ENCODE measurements at regions of chr15 and their contacts with region 1.

Region 1: DNA sequence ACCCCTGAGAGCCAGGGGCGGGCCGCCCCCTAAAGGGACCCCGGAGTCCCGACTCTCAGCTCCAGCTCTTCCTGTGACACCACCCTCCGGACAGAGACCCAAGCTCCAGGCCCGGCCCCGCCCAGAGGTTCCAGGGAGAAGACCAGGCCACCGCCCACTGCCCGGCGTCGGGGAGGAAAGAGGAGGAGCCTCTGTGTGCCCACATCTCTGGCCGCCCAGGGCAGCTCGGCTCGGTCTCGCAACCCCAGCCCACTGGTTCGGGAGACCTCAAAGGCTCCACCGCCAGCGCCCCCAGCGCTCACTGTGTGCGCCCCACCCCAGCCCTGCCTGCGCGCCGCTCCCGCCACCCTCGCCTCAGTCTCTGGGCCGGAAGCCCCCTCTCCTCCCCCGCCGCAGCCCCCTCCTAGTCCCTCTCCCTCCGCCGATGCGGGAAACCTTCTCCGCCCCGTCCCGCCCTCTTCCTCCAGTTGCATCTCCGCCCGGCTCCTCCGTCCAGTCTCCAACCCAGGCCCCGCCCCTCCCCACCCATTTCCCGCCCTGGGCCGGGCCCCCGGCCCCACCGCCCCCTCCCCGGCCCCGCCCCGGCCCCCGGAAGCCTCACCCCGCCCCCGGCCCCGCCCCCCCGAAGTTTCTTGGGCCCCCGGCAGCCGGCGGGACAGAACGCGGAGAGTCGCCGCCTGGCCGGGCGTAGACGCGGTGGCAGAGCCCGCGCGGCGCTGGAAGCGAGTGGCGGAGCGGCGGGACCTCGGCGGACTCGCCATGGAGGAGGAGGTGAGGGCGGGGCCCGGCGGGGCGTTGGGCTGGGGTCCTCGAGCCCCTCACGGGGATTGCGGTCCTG is at the start of gene PLEKHO2:
- DNase-seq: peak; percentile 85
- ATAC-seq: peak; percentile 89
- H3K4me3 ChIP-seq: peak within 1 kb of the TSS; percentile 75 to 92 (median 89)
- H3K27ac ChIP-seq: peak within 1 kb of the TSS; percentile 52
- H3K4me1 ChIP-seq: peaks cover 46% of the 10 kb centered on the region
- H3K27me3 ChIP-seq: no peaks in the 10 kb centered on the region
- CTCF ChIP-seq: peak; percentile 49
- EP300 ChIP-seq: no peak
- POLR2A ChIP-seq: peak; percentile 27 to 86; a peak in 3 of 4 replicates
- RAD21 ChIP-seq: peak; percentile 42; the same call in 1 of the 2 replicates
- total RNA-seq, gene PLEKHO2: 3.1 and 3.8 TPM in 2 replicates

Region 2: GRCh38 chr15:64825431-64826294 is 15.8 kb before region 1 on chr15 and contains the start of gene PIF1:
- CTCF ChIA-PET with region 1: no interaction called
- POLR2A ChIA-PET with region 1: interaction called, 23 read pairs
- in situ Hi-C with region 1: no loop called
- intact Hi-C with region 1: no loop called
- DNase-seq: peak; percentile 98
- ATAC-seq: peak; percentile 97
- H3K4me3 ChIP-seq: peak within 1 kb of the TSS; percentile 70 to 92 (median 79)
- H3K27ac ChIP-seq: peak within 1 kb of the TSS; percentile 93
- H3K4me1 ChIP-seq: peaks cover 28% of the 10 kb centered on the region
- H3K27me3 ChIP-seq: no peaks in the 10 kb centered on the region; a peak in 1 of 5 replicates
- CTCF ChIP-seq: no peak
- EP300 ChIP-seq: peak; percentile 9 to 13; a peak in 1 of 4 replicates
- POLR2A ChIP-seq: peak; percentile 73 to 92
- RAD21 ChIP-seq: no peak
- total RNA-seq, gene PIF1: 8.3 and 19.7 TPM in 2 replicates